AG04450 (cell line): ENCODE measurements at regions of chr18 and their contacts with region 1.

Region 1: DNA sequence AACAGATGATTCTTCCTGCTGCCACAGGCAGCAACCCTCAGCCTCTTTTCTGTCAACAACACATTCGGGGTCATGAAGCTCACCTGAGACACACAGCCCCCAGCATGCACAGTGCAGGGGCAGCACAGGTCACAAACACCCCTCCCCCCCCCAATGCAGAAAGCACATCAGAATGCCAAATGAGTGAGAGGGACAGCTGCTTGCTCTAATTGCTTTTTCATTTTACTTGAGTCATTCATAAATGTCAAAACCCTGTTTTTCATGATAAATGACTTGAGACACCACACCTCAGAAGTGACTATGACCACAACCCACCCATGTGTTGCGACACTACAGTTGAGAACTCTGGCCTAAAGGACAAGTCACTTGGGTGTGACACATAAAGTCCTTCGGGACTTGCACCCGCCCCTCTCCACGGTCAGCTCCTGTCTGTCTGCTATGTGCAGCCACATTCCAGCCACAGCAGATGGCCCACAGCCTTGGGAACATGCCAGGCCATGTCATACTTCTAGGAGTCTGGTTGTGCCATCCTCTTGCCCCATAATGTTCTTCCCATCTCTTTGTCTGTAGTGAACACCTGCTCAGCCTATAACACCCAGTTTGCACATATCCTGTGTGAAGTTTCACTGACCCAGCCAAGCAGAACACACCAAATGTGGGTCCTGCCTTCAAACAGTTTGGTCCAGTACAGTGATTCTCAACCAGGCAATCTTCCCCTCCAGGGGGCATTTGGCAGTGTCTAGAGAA is 30.2 kb upstream of the RIOK3 start:
- DNase-seq: no peak
- H3K4me3 ChIP-seq: no peak overlapping the region
- H3K27ac ChIP-seq: no peak overlapping the region
- H3K27me3 ChIP-seq: no peaks in the 10 kb centered on the region
- CTCF ChIP-seq: no peak

Region 2: DNA sequence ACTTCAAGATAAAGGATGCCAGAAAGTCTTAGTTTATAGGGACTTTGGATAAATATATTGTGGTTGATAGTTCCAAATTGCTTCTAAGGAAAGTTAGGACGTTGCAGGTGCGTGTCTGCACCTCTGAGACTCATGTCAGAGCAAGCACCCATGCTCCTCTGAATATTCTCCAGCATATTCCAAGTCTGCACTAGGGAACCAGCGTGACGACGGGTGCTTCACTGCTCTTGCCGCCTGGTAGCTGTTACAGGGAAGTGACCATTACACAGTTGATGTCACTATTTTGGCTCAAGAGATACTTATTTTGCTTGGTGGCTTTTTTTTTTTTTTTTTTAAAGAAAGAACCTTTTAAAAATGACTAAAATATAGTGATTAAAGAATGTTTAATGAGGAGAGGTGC is 1217.8 kb before region 1 on chr18:
- CTCF ChIA-PET with region 1: interaction called, 10 read pairs
- POLR2A ChIA-PET with region 1: no interaction called
- DNase-seq: no peak
- H3K4me3 ChIP-seq: no peak overlapping the region
- H3K27ac ChIP-seq: no peak overlapping the region
- H3K27me3 ChIP-seq: peaks cover 3% of the 10 kb centered on the region
- CTCF ChIP-seq: no peak